Heart right ventricle (tissue), 16 donors: ENCODE measurements at regions of chr2 and their contacts with region 1.

Region 1: DNA sequence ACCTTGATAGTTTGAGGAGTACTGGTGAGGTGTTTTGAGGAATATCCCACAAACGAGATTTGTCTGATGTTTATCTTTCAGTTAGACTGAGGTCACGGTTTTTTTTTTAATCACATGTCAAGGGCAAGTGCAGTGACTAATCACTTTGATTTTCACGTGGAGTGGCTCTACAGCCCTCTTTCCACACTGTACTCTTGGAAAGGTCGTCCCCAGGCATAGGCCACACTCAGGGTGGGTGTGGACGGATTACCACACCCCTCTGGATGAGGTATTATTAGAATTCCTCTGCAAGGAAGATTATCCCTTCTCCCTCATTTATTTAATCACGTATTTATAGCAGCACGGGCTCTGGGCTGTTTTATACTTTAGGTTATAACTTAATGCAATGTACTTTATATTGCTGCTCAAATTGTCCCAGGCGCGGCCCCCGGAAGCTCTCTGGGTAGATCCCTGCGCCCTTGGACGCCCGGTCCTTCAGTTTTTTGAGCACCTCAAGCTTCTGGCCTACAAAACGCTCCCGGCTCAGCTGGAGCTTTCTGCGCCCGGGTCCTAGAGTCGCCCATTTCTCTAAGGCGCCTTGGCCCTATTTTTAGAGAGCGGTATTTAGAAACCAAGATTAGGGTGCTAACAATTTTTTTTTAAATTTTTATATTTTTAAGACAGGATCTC is 515 bp upstream of the PLEKHB2 start:
- DNase-seq: peak in 1 of 2 donors; percentile 39
- ATAC-seq: peak; percentile 80 to 88 (median 84)
- H3K4me3 ChIP-seq: peak overlapping the region; percentile 70 to 99 (median 92)
- H3K27ac ChIP-seq: peak overlapping the region; percentile 66 to 99 (median 94)
- H3K4me1 ChIP-seq: peaks cover 0 to 38% (median 30%) of the 10 kb centered on the region in 9 donors
- H3K27me3 ChIP-seq: no peaks in the 10 kb centered on the region
- CTCF ChIP-seq: no peak

Region 2: DNA sequence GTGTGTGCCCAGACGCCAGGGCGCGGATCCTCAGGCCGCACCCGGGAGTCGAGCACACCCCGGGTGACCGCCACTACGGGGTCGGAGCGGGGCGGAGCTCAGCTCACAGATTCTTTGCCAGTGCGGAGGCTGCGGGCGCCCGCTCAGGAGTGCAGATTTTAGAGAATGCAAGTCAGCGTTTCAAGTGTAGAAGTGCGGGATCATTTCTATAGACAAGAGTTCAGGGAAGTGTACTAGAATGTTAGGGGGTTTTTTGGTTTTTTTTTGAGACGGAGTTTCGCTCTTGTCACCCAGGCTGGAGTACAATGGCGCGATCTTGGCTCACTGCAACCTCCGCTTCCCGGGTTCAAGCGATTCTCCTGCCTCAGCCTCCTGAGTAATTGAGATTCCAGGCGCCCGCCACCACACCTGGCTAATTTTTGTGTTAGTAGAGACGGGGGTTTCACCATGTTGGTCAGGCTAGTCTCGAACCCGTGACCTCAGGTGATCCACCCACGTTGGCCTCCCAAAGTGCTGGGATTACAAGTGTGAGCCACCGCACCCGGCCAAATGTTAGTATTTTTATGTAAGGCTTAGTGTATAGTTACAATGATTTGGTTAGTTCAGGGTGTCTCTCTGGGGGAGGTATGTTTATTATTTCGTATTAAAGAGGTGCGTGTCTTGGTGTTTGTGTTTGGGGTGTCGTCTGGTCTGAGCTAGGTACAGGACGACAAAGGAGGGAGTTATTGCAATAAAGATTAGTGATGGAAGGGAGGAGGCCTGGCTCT is 10.7 kb before region 1 on chr2:
- intact Hi-C with region 1: loop called in 1 of 10 experiments (anchors 1 kb)
- DNase-seq: no peak
- ATAC-seq: peak; percentile 82 to 95 (median 90)
- H3K4me3 ChIP-seq: peak overlapping the region; percentile 62 to 95 (median 74)
- H3K27ac ChIP-seq: peak overlapping the region; percentile 87 to 100 (median 97)
- H3K4me1 ChIP-seq: peaks cover 0 to 30% (median 22%) of the 10 kb centered on the region in 9 donors
- H3K27me3 ChIP-seq: no peaks in the 10 kb centered on the region
- CTCF ChIP-seq: no peak